ENCODE measurements at regions of chr3 and their contacts with region 1.

Region 1: DNA sequence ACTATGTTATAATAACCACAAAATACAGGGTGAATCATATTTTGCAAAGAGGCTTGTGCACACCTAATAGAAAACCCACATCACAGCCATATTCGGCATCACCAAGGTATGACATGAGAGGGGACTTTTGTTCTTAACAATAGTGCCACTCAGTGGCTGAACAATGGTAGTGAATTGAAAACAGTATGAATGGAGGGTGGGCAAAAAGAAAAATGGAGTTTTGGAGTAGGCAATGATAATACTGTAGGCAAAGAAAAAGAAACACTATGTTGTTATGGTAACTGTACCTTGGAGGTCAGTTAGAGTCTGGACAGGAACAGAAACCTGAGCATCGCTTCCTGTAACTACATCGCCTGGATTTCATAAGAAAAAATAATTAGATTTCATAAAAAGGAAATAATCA is 348.6 kb downstream of the PLCL2 start:
- DNase-seq: peak; percentile 27
- H3K4me3 Mint-ChIP-seq: no peak overlapping the region
- H3K27ac Mint-ChIP-seq: no peak overlapping the region
- H3K4me1 Mint-ChIP-seq: peaks cover 18% of the 10 kb centered on the region
- H3K27me3 Mint-ChIP-seq: no peaks in the 10 kb centered on the region

Region 2: GRCh38 chr3:17023006-17023664 is 210.3 kb before region 1 on chr3:
- intact Hi-C with region 1: loop called (anchors 10 kb)
- DNase-seq: peak; percentile 24
- H3K4me3 Mint-ChIP-seq: peak overlapping the region; percentile 56
- H3K27ac Mint-ChIP-seq: peak overlapping the region; percentile 73
- H3K4me1 Mint-ChIP-seq: peaks cover 51% of the 10 kb centered on the region
- H3K27me3 Mint-ChIP-seq: no peaks in the 10 kb centered on the region

Region 3: DNA sequence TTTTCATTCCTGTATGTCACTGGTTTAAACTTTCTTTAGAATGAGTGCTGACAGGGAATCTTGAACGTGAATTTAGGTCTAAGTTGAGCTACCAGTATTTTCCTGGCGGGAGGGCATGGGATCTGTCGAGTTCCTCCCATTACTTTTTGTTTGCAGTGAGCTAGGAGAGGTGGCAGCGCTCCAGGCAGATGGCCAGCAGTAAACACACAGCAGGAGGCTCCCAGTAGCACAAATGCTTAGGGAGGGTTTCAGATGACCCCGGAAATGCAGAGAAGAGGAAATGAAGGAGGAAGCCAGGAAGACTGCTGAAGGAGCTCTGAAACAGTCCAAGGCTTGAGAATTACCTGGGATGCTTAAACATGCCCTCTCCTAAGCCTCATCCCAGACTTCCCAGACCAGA is 162.8 kb before region 1 on chr3:
- intact Hi-C with region 1: loop called (anchors 5 kb)
- DNase-seq: no peak
- H3K4me3 Mint-ChIP-seq: no peak overlapping the region
- H3K27ac Mint-ChIP-seq: no peak overlapping the region
- H3K4me1 Mint-ChIP-seq: peaks cover 30% of the 10 kb centered on the region
- H3K27me3 Mint-ChIP-seq: no peaks in the 10 kb centered on the region

Measured in activated T-helper 2 cell treated with anti-CD3 and anti-CD28 coated beads, Interferon-gamma antibody, Interleukin-2, Interleukin-4, amounts not matched to agents 10 μg/mL and 5 μg/mL and 100 μg/mL, durations not matched to agents 14 hours and 24 hours and 36 hours (primary cell).